PC-3 (cell line): ENCODE measurements at regions of chr9 and their contacts with region 1.

Region 1: DNA sequence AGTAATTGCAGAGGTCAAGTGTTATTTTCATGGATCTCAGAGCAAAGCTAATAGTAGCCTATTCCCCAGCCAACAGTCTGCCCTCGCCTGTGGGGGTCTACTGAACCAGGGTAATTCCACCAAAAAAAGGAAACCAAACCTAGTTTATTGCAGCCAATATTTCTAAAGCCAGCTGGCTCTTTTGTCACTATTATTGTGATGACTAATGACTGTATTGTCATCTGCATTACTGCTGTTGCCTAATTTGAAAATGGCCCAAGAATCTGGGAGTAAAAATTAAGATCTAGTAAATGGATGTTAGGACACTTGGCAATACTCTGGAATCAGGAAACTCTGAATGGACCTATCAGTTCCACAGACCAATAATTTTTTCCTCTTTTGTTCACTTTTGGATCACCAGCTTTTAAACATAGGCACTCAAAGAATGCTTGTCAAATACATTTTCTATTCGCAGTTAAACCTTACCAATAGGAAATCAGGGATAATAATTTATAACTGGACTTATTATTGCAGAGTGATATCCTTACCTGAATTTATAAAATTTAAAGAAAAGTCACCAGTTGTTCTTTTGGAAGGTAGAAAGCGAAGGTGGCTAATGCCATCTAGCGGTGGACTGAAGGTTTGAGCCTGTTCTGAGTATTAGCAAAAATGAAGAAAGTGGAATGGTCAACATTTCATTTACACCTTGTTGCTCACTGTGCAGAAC is 69.2 kb downstream of the SYK start:
- DNase-seq: peak; percentile 59
- ATAC-seq: peak; percentile 29; the same call in 1 of the 2 replicates
- H3K4me3 ChIP-seq: no peak overlapping the region
- H3K27ac ChIP-seq: no peak overlapping the region
- H3K4me1 ChIP-seq: no peaks in the 10 kb centered on the region
- H3K27me3 ChIP-seq: no peaks in the 10 kb centered on the region
- CTCF ChIP-seq: peak; percentile 86

Region 2: GRCh38 chr9:89576404-89576839 is 1294.4 kb before region 1 on chr9:
- CTCF ChIA-PET with region 1: no interaction called
- POLR2A ChIA-PET with region 1: no interaction called
- intact Hi-C with region 1: loop called (anchors 10 kb)
- DNase-seq: peak; percentile 48
- ATAC-seq: no peak
- H3K4me3 ChIP-seq: no peak overlapping the region
- H3K27ac ChIP-seq: no peak overlapping the region
- H3K4me1 ChIP-seq: no peaks in the 10 kb centered on the region
- H3K27me3 ChIP-seq: peaks cover 53% of the 10 kb centered on the region
- CTCF ChIP-seq: peak; percentile 68

Region 3: GRCh38 chr9:89597711-89598625 is 1272.8 kb before region 1 on chr9:
- CTCF ChIA-PET with region 1: no interaction called
- POLR2A ChIA-PET with region 1: no interaction called
- intact Hi-C with region 1: loop called (anchors 1 kb)
- DNase-seq: peak; percentile 71
- ATAC-seq: peak; percentile 78; the same call in 1 of the 2 replicates
- H3K4me3 ChIP-seq: no peak overlapping the region
- H3K27ac ChIP-seq: no peak overlapping the region
- H3K4me1 ChIP-seq: no peaks in the 10 kb centered on the region
- H3K27me3 ChIP-seq: peaks cover 25% of the 10 kb centered on the region
- CTCF ChIP-seq: peak; percentile 77

Region 4: GRCh38 chr9:90142580-90142979 is 728.2 kb before region 1 on chr9:
- CTCF ChIA-PET with region 1: no interaction called
- POLR2A ChIA-PET with region 1: no interaction called
- intact Hi-C with region 1: loop called (anchors 10 kb)
- DNase-seq: peak; percentile 52
- ATAC-seq: no peak
- H3K4me3 ChIP-seq: no peak overlapping the region
- H3K27ac ChIP-seq: no peak overlapping the region
- H3K4me1 ChIP-seq: no peaks in the 10 kb centered on the region
- H3K27me3 ChIP-seq: peaks cover 8% of the 10 kb centered on the region; the same call in 1 of the 2 replicates
- CTCF ChIP-seq: peak; percentile 66

Region 5: GRCh38 chr9:90773617-90774016 is 97.2 kb before region 1 on chr9:
- CTCF ChIA-PET with region 1: no interaction called
- POLR2A ChIA-PET with region 1: no interaction called
- intact Hi-C with region 1: loop called (anchors 1 kb)
- DNase-seq: peak; percentile 32
- ATAC-seq: peak; percentile 67
- H3K4me3 ChIP-seq: no peak overlapping the region
- H3K27ac ChIP-seq: no peak overlapping the region
- H3K4me1 ChIP-seq: no peaks in the 10 kb centered on the region
- H3K27me3 ChIP-seq: 0 out of 2 replicates have a peak, but pooled peaks cover under 1% of the 10 kb centered on the region
- CTCF ChIP-seq: peak; percentile 59

Region 6: GRCh38 chr9:91328186-91328585 is 457.4 kb after region 1 on chr9:
- CTCF ChIA-PET with region 1: no interaction called
- POLR2A ChIA-PET with region 1: no interaction called
- intact Hi-C with region 1: no loop called
- DNase-seq: no peak
- ATAC-seq: no peak
- H3K4me3 ChIP-seq: no peak overlapping the region
- H3K27ac ChIP-seq: no peak overlapping the region
- H3K4me1 ChIP-seq: no peaks in the 10 kb centered on the region
- H3K27me3 ChIP-seq: no peaks in the 10 kb centered on the region
- CTCF ChIP-seq: no peak